ENCODE measurements at regions of chr2 and their contacts with region 1.

Region 1: DNA sequence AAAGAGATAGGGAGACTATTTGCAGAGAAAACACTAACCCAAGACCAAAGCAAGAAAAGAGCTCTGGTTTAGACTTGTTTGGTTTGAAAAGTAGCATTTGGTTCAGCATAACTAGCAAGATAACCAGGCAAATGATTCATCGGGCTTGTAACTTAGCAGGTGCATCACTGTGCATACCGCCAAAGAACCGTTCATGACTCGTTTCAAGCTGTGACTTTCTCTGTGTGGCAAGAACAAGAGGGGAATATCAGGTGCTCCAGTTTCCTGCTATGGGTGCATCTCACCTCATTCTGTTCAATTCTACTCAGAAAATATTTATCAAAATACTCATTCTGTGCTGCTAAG is 244.9 kb downstream of the ETAA1 start:
- DNase-seq: no peak
- H3K4me3 ChIP-seq: no peak overlapping the region
- H3K27ac ChIP-seq: no peak overlapping the region
- H3K4me1 ChIP-seq: peaks cover 0 to 14% (median 6%) of the 10 kb centered on the region in 4 donors
- H3K27me3 ChIP-seq: no peaks in the 10 kb centered on the region
- CTCF ChIP-seq: no peak
- EP300 ChIP-seq: no peak
- POLR2A ChIP-seq: no peak

Region 2: DNA sequence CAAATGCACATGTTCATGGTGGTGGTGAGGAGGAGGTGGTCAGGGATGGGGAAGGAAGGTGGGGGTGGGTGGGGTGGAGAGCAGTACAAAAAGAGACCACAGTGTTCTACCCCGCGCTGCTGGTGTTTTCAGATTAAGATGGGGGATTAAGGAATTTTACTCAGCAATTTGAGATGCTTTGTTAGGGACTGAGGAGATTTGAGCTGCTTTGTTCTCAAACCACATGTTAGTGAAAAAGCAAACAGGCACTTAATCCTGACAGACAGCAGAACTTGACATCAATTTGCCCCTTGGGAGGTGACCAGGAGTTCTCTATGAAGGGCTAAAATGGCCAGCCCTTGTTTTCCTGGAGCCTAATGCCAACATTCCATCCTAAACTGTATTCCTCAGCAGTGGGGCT is 962.6 kb before region 1 on chr2:
- intact Hi-C with region 1: loop called (anchors 5 kb)
- DNase-seq: no peak
- H3K4me3 ChIP-seq: no peak overlapping the region
- H3K27ac ChIP-seq: peak overlapping the region in 1 of 4 donors; percentile 11
- H3K4me1 ChIP-seq: peaks cover 0 to 39% (median 16%) of the 10 kb centered on the region in 4 donors
- H3K27me3 ChIP-seq: no peaks in the 10 kb centered on the region
- CTCF ChIP-seq: no peak
- EP300 ChIP-seq: no peak
- POLR2A ChIP-seq: no peak

Measured in sigmoid colon (tissue), 7 donors.